ENCODE measurements at regions of chr3 and their contacts with region 1.

Region 1: DNA sequence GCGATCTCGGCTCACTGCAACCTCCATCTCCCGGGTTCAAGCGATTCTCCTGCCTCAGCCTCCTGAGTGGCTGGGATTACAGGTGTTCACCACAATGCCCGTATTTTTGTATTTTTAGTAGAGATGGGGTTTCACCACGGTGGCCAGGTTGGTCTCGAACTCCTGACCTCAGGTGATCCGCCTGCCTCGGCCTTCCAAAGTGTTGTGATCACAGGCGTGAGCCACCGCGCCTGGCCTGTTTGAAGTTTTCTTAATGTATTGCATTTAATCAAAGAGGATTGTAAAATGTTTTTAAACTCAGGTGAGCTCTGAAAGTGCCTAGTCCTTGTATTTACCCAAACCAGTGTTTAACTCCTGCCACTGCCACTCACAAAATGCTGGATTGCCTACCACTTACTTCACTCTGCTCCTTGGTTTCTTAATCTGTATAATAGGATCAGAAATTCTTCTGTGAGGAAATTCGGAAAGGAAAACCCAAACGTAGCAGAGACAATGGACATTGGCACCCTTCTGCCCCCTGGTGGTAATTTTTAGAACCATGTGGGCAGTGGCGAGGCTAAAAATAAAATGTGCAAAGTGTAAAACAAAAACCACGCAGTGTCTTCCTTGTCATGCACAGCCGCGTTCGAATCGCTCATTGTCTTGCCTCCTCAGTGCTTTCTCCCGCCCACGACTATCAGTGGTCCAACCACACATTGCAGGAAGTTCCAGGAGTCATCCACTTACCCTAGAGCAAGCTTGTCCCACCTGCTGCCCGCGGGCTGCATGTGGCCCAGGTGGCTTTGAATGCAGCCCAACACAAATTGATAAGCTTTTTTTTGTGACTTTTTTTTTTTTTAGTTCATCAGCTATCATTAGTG is 27.3 kb downstream of the CEP19 start:
- DNase-seq: peak; percentile 60 to 83
- H3K4me3 ChIP-seq: no peak overlapping the region
- H3K4me1 ChIP-seq: no peaks in the 10 kb centered on the region
- H3K27me3 ChIP-seq: peaks cover 7% of the 10 kb centered on the region

Region 2: GRCh38 chr3:196611761-196612483 is 72.9 kb before region 1 on chr3:
- in situ Hi-C with region 1: loop called (anchors 5 kb)
- DNase-seq: no peak
- H3K4me3 ChIP-seq: no peak overlapping the region
- H3K4me1 ChIP-seq: no peaks in the 10 kb centered on the region
- H3K27me3 ChIP-seq: no peaks in the 10 kb centered on the region

Region 3: GRCh38 chr3:196914866-196915265 is 230.1 kb after region 1 on chr3:
- in situ Hi-C with region 1: no loop called
- DNase-seq: no peak
- H3K4me3 ChIP-seq: no peak overlapping the region
- H3K4me1 ChIP-seq: no peaks in the 10 kb centered on the region
- H3K27me3 ChIP-seq: no peaks in the 10 kb centered on the region